AG04449 (cell line): ENCODE measurements at regions of chr17 and their contacts with region 1.

Region 1: DNA sequence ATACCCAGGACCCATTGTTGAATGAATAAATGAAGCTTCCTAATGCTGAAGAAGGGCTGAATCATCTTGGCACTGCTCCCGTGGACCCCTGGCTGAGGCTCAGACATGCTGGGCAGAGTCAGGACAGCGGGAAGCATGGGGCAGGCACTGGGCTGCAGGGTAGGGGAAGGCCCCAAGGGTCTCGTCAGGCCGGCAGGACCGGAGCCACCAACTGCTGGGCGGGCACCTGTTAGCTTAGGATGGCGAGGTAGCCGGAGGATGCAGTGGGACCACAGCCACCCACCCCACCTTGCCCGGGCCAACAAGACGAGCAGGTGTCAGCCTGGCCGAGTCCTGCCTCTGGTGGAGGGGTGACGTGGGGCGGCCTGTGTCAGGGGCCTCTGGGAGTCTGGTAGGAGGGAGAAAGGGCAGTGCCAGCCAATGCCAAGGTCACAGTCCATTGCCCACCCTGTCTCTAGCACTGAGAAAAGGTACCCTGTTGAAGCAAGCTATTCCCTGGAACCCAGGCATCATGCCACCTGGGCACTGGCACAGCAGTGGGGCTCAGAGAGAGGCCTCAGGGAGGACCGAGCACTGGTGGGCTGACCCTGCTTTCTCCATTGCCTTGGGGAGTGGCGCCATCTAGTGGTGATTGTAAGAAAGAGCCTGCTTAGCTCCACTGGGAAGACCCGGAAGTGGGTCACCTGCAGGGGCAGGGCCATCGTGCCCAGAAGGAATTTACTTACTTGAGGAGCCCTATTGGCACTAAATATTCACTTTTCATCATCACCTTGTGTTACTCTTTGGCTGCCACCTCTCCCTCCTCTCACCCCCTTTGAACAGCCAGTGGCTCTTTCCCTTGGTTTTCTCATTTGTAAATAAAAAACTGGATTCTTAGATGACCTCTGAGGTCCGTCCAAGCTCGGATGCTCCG is 3.0 kb upstream of the DLX3 start:
- DNase-seq: peak; percentile 10
- H3K4me3 ChIP-seq: no peak overlapping the region
- CTCF ChIP-seq: peak; percentile 85

Region 2: DNA sequence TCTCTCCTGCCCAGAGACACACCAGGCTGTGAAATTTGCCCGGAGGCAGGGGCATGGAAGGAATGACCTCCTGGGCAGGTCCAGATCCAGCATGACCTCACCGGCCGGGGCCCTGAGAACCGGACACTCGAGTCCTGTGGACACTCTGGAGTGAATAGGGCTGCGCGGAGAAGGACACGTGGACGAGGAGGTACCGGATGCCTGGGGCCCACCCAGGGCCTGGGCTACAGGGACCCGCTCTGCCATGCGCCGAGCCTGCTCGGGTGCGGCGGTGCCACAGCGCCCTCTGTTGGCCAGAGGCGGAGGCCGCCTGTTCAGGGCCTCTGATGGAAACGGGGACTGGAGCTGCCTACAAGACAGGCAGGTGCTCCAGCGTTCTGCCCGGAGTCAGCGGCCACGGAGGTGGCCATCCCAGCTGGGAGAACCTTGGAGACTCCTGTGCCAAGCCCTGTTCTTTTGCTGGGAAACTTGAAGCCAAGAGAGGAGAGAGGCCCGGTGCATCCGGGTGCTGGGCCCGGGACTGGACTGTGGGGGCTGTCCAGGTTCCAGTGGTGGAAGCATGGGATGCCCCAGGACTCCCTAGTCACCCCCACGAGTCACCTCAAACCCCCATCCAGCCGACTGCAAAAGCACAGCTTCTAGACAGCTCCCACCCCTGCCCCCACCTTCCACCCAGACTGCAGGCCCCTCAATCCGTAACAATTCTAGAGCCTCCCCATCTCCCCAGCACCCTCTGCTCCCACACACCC is 441.6 kb before region 1 on chr17:
- CTCF ChIA-PET with region 1: interaction called, 18 read pairs
- POLR2A ChIA-PET with region 1: no interaction called
- DNase-seq: no peak
- H3K4me3 ChIP-seq: no peak overlapping the region
- CTCF ChIP-seq: peak; percentile 99

Region 3: GRCh38 chr17:49830605-49831004 is 167.4 kb before region 1 on chr17:
- CTCF ChIA-PET with region 1: interaction called, 37 read pairs
- POLR2A ChIA-PET with region 1: no interaction called
- DNase-seq: no peak
- H3K4me3 ChIP-seq: no peak overlapping the region
- CTCF ChIP-seq: no peak

Region 4: DNA sequence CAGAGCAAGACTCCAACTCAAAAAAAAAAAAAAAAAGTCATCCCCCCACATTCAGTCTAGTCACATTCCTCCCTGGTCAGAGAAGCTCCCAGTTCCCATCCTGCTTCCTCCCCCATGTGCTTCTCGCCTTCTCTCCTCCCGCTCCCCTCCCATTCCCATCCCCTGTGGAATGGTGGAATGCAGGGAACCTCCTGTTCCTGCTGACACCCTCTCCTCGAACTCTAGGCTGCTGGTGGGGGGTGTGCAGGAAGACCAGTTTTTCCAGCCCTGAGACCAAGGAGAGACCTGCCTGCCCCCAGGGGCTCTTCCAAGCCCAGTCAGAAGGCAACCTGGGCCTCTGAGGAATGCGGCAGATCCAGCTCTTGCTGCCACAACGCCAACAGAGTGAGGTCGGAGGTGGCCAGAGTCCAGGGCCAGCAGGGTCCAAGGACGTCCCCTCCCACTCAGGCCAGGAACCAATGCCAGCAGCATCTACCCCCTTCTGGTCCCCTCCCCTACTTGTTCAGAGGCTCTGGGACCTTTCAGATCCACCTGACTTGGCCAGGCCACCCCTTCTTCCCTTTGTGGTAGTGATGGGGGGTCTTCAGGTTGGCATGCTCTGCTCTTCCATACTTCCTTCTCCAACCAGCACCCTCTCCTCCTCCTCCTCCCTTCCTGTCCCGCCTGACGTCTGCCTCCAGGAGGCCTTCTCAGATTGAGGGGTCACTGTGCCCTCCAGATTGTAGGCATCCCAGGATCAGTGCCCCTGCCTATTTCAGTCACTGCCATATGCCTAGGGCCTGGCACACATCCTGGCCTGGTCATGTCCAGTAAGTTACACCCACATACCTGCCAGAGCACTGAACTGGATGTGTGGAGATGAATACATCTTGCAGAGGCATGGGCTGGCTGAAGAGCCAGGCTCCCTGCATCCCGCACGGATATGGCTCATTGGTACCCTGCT is 110.7 kb before region 1 on chr17:
- CTCF ChIA-PET with region 1: interaction called, 32 read pairs
- POLR2A ChIA-PET with region 1: no interaction called
- DNase-seq: no peak
- H3K4me3 ChIP-seq: no peak overlapping the region
- CTCF ChIP-seq: no peak

Region 5: GRCh38 chr17:49935526-49936210 is 62.4 kb before region 1 on chr17:
- CTCF ChIA-PET with region 1: interaction called, 42 read pairs
- POLR2A ChIA-PET with region 1: no interaction called
- DNase-seq: no peak
- H3K4me3 ChIP-seq: no peak overlapping the region
- CTCF ChIP-seq: no peak

Region 6: GRCh38 chr17:50009282-50009681 is 11.2 kb after region 1 on chr17:
- CTCF ChIA-PET with region 1: interaction called, 37 read pairs
- POLR2A ChIA-PET with region 1: no interaction called
- DNase-seq: no peak
- H3K4me3 ChIP-seq: no peak overlapping the region
- CTCF ChIP-seq: no peak

Region 7: DNA sequence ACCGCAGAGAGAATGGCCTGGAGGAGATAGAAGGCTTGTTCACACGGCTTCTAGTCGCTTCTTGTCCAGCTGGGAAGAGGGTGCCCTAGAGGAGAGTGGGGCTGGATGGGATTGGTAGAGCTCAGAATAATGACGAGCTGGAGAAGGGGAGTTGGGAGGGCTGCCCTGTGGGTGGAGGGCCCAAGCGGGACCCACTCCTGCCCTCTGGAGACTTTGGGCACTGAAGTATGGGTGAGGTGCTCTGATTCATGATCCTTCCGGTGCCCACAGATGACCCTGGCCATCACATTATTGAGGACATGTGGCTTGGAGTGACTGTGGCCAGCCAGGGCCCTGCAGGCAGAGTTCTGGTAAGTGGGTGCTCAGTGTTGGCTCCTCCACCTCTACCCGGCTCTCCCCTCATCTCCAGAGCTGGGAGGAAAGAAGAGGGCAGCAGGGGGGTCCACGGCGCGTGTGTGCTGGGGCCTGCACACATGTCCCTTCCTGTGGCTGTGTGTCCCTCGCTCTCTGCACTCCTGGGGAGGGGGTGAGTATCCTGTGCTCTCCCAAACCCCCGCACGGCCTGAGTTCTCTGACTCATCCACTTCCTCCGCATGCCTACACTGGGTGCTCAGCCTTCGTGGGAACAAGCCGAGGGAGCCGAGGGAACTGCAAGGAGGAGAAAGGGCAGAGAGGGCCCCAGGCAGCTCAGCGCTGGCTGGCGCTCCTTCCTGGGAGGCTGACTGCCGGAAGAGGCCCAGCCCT is 66.4 kb after region 1 on chr17:
- CTCF ChIA-PET with region 1: interaction called, 27 read pairs
- POLR2A ChIA-PET with region 1: no interaction called
- DNase-seq: peak; percentile 94
- H3K4me3 ChIP-seq: no peak overlapping the region
- CTCF ChIP-seq: no peak

Region 8: DNA sequence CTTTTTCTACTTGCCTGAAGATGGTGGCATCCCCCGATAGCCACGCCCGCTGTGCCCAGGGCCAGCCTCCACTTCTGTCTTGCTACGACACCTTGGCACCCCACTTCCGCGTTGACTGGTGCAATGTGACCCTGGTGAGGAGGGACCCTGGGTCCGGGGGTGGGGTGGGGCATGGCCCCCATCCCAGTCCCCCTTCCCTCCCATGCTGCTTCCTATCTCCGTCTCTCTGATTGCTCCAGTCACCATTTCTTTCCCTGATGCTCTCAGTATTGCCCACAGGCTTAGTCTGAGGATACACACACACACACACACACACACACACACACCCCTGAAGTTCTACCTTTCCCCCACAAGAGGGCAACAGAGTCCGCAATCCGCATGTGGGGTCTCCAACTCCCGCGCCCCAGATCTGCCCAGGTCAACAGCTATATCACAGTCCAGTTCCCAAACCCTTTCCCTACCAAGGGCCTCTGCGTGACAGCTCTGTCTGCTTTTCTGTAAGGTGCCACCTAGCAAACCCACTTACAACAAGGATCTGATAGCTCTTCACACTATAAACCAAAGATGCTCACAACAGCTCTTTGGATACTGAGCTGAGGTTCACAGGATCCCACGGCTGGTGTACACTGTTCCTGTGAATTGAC is 171.2 kb after region 1 on chr17:
- CTCF ChIA-PET with region 1: no interaction called
- POLR2A ChIA-PET with region 1: no interaction called
- DNase-seq: no peak
- H3K4me3 ChIP-seq: no peak overlapping the region
- CTCF ChIP-seq: peak; percentile 84